Ascending aorta (tissue), 2 donors: ENCODE measurements at regions of chr20 and their contacts with region 1.

Region 1: DNA sequence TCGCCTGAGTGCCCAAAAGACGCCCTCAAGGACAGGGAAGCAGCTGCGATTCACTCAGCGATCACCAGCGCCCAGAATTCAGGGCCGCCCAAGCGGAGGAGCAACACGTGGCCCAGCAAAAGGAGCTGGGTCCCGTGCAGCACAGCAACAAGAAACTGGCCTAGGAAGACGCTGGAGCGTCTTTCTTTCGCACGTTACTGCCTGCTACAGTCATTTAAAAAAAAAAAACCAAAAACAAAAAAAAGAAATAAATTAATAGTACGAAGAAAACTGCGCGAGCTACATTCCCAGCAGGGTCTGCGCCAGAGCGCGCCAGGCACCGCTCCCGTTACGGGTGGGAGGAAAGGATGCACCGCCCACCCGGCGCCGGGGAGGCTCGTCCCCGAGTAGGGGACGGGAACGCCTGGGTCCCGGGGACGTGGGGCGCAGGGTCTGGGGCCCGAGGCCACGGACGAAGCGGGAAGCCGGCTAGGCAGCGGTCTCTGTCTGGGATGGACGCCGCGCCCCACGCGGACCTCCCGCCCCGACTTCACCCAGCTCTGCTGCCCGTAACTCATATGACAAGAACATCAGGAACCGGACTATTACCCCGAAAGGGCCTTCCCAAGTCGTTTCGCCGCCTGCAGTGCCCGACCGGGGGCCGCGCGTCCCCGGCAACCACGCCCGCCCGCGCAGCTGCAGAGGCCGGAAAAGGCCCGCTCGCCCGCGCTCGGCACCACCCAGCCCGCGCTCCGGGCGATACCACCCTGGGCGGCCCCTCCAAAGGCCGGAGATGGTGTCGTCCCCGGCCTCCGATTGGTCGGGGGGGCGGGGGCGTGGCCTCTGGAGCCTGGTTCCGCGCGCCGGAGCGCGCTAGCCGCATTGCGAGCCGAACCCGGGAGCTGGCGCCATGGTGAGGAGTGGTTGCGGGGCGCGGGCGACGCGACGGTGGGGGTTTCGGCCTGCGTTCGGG is at the start of gene NOP56:
- DNase-seq: peak; percentile 48 to 94
- H3K4me3 ChIP-seq: peak within 1 kb of the TSS; percentile 69 to 87
- H3K27ac ChIP-seq: peak within 1 kb of the TSS; percentile 81 to 82
- H3K4me1 ChIP-seq: peaks cover 9 to 15% of the 10 kb centered on the region in 2 donors
- H3K27me3 ChIP-seq: no peaks in the 10 kb centered on the region
- CTCF ChIP-seq: no peak
- total RNA-seq, gene NOP56: 32.1 TPM

Region 2: GRCh38 chr20:2508631-2509467 is 143.2 kb before region 1 on chr20 and contains the start of gene ZNF343:
- intact Hi-C with region 1: loop called (anchors 5 kb)
- DNase-seq: peak in 1 of 2 donors; percentile 88
- H3K4me3 ChIP-seq: peak within 1 kb of the TSS; percentile 74 to 80
- H3K27ac ChIP-seq: peak within 1 kb of the TSS; percentile 88 to 90
- H3K4me1 ChIP-seq: peaks cover 0 to 13% of the 10 kb centered on the region in 2 donors
- H3K27me3 ChIP-seq: no peaks in the 10 kb centered on the region
- CTCF ChIP-seq: no peak
- total RNA-seq, gene ZNF343: 0.64 TPM

Region 3: DNA sequence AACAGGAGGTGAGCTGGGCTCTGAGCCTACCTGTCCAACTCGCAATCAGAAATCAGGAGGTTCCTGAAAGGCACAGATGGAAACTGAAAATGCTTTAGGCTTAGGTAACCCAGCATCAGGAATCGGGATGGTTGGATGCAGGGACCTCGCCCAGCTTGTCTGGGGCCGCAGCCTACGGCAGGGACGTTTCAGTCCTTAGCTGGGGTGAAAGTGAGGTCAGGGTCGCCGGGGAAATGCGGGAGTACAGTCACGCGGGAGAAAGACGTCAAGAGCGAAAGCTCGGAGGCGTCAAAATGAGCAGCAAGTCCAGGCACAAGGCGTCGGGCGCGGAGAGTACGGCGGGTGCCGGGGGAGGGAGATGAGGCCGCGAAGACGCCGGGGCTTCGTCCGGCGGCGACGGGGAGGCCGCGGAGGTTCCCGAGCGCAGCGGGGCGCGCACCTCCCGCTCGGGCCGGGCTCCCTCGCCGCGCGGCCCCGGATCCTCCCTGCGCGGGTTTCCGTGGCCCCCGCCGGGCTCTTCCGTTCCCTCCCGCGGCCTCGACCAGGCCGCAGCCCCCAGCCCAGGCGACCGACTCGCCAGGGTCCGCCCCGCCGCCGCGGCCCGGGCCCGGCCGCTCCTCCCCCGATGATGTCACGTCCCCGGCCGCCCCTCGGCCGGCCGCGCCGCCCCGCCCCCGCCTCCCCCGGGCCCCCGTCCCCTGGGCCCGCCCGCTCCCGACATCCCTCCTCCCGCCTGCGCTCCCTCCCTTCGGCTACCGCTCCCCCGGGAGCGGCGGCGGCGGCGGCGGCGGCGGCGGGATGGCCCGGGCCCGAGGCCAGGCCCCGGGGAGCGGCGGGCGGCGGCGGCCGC is 40.2 kb after region 1 on chr20 and contains the start of gene EBF4:
- intact Hi-C with region 1: loop called (anchors 1 kb)
- DNase-seq: peak in 1 of 2 donors; percentile 71
- H3K4me3 ChIP-seq: peak within 1 kb of the TSS; percentile 65 to 92
- H3K27ac ChIP-seq: peak within 1 kb of the TSS; percentile 83 to 94
- H3K4me1 ChIP-seq: peaks cover 2 to 7% of the 10 kb centered on the region in 2 donors
- H3K27me3 ChIP-seq: peaks cover 6% of the 10 kb centered on the region
- CTCF ChIP-seq: no peak
- total RNA-seq, gene EBF4: 19.2 TPM

Region 4: GRCh38 chr20:2873010-2873746 is 221.1 kb after region 1 on chr20 and contains the start of gene PTPRA:
- intact Hi-C with region 1: loop called (anchors 5 kb)
- DNase-seq: peak; percentile 71 to 94
- H3K4me3 ChIP-seq: peak within 1 kb of the TSS; percentile 81 to 96
- H3K27ac ChIP-seq: peak within 1 kb of the TSS; percentile 62 to 66
- H3K4me1 ChIP-seq: peaks cover 4 to 8% of the 10 kb centered on the region in 2 donors
- H3K27me3 ChIP-seq: no peaks in the 10 kb centered on the region
- CTCF ChIP-seq: no peak
- total RNA-seq, gene PTPRA: 24.2 TPM

Region 5: DNA sequence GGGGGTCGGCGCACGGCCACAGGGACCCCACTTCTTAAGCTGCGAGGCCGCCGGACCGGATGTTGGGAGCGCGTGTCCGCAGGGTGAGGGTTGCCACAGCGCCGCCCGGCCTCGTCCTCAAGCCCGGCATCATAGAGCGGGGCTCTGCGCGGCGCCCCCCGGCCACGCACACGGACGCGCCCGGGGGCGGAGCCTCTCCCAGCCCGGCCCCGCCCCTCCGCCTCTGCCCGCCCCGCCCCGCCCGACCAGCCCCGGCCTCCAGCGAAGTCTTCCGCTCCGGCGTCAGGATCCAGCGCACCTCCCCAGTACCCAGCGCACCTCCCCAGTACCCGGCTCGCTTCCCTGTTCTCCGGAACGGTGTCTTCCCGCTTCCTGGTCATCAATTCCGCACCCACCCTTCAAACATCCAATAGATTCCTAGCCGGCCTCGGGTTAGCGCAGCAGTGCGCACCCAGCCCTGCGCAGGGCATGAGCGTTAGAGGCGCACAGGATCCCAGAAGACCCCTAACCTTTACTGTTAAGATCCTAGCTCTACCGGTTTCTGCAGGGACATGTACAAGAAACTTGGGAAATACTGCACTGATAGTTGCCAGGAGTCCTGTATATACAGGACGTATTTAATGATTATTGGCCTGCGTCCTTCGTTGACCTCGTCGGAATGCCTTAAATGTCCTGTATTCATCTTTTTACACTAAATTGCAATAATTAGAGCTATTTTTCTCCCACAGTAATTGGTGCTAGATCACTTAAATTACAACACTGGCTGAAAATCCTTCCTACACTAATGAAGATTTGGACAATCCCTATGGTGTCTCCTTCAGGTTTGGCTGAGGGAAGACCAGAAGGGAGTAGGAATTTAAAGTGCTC is 756.0 kb after region 1 on chr20:
- intact Hi-C with region 1: loop called (anchors 10 kb)
- DNase-seq: peak in 1 of 2 donors; percentile 84
- H3K4me3 ChIP-seq: peak overlapping the region; percentile 89 to 93
- H3K27ac ChIP-seq: peak overlapping the region; percentile 95
- H3K4me1 ChIP-seq: peaks cover 0 to 7% of the 10 kb centered on the region in 2 donors
- H3K27me3 ChIP-seq: no peaks in the 10 kb centered on the region
- CTCF ChIP-seq: no peak